ENCODE measurements at regions of chr14 and their contacts with region 1.

Region 1: DNA sequence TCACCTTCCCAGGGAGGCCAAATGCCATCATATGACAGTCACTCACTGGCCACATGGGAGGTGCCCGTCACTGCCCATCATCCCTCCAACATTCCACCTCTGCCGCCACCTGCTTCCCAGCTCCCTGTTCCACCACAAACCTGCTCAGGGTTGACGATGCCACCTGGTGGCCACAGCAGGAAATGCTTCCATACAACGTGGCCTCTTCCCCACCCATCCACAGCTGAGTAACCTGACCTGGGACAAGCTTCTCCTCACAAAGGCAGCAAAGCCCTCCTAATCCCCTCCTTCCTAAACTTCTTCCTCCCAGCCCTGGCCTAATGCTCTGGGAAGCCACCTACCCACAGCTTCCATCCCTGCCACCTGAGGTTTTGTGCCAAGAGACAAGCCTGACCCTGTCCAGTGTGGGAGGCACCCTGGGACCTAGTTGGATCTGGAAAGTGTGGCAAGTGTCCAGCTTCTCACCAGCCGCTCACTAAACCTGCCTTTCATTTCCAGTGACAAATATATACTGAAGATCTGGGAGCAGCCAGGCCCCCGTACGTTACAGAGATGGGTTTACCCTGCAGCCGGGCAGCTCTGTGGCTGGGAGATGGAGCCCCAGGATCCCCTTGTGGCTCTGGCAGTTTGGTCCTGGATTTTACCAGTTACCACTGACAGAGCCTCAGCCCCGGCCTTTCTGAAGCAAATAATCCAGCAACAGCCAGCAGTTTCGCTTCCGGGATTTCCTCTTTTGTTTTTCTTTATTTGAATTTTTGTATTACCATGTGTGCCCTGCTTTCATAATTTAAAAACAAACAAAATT is 4.2 kb downstream of the DEGS2 start:
- DNase-seq: peak; percentile 46
- ATAC-seq: peak; percentile 56
- H3K4me3 ChIP-seq: peak overlapping the region in 2 of 3 experiments; percentile 17 to 49; a peak in 4 of 6 replicates
- H3K27ac ChIP-seq: no peak overlapping the region
- H3K4me1 ChIP-seq: peaks cover 39% of the 10 kb centered on the region
- H3K27me3 ChIP-seq: peaks cover 7 to 25% of the 10 kb centered on the region in 2 experiments
- CTCF ChIP-seq: peak; percentile 87
- EP300 ChIP-seq: no peak
- POLR2A ChIP-seq: no peak
- RAD21 ChIP-seq: peak; percentile 78

Region 2: GRCh38 chr14:100140452-100141078 is 14.7 kb before region 1 on chr14:
- CTCF ChIA-PET with region 1: interaction called, 11 read pairs
- POLR2A ChIA-PET with region 1: interaction called, 33 read pairs
- in situ Hi-C with region 1: no loop called
- intact Hi-C with region 1: no loop called
- DNase-seq: peak; percentile 82
- ATAC-seq: peak; percentile 73
- H3K4me3 ChIP-seq: peak overlapping the region in 1 of 3 experiments; percentile 62; a peak in 3 of 6 replicates
- H3K27ac ChIP-seq: peak overlapping the region; percentile 62
- H3K4me1 ChIP-seq: peaks cover 53% of the 10 kb centered on the region
- H3K27me3 ChIP-seq: no peaks in the 10 kb centered on the region
- CTCF ChIP-seq: peak; percentile 81
- EP300 ChIP-seq: peak in 1 of 2 experiments; percentile 5; a peak in 1 of 4 replicates
- POLR2A ChIP-seq: no peak
- RAD21 ChIP-seq: peak; percentile 83